ENCODE measurements at regions of chr7 and their contacts with region 1.

Region 1: GRCh38 chr7:151368136-151368571 is 26.5 kb downstream of the NUB1 start:
- DNase-seq: peak; percentile 62 to 80 (median 74)
- H3K4me3 ChIP-seq: no peak overlapping the region
- H3K27ac ChIP-seq: no peak overlapping the region
- H3K4me1 ChIP-seq: no peaks in the 10 kb centered on the region
- H3K27me3 ChIP-seq: no peaks in the 10 kb centered on the region

Region 2: DNA sequence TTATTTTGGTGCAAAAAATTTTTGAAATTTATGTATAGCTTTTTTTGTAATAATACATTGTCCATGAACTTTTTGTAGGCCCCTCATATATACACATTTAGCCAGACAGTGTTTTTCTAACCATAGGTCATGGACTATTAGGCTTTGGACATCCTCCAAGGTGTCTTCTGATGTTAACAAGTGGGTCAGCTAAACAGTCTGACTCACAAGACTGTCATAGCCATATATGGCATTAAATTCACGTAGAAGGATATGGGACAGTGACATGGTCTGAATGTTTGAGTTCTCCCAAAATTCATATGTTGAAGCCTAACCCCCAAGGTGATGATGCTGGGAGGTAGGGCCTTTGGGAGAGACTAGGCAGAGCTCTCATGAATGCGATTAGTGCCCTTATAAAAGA is 40.5 kb before region 1 on chr7:
- CTCF ChIA-PET with region 1: no interaction called
- POLR2A ChIA-PET with region 1: no interaction called
- DNase-seq: no peak
- H3K4me3 ChIP-seq: no peak overlapping the region
- H3K27ac ChIP-seq: no peak overlapping the region
- H3K4me1 ChIP-seq: no peaks in the 10 kb centered on the region
- H3K27me3 ChIP-seq: peaks cover 0 to 3% (median 0%) of the 10 kb centered on the region in 5 experiments

Region 3: GRCh38 chr7:151381348-151382078 is 13.4 kb after region 1 on chr7:
- CTCF ChIA-PET with region 1: interaction called, 11 read pairs
- POLR2A ChIA-PET with region 1: no interaction called
- DNase-seq: peak in 2 of 3 donors; percentile 21 to 49
- H3K4me3 ChIP-seq: peak overlapping the region in 6 of 7 experiments; percentile 9 to 63 (median 54)
- H3K27ac ChIP-seq: no peak overlapping the region
- H3K4me1 ChIP-seq: peaks cover 0 to 21% (median 18%) of the 10 kb centered on the region in 4 experiments
- H3K27me3 ChIP-seq: peaks cover 0 to 53% (median 16%) of the 10 kb centered on the region in 5 experiments

Region 4: GRCh38 chr7:151386301-151387132 is 18.4 kb after region 1 on chr7:
- CTCF ChIA-PET with region 1: interaction called, 11 read pairs
- POLR2A ChIA-PET with region 1: no interaction called
- DNase-seq: no peak
- H3K4me3 ChIP-seq: no peak overlapping the region
- H3K27ac ChIP-seq: no peak overlapping the region
- H3K4me1 ChIP-seq: peaks cover 0 to 25% (median 17%) of the 10 kb centered on the region in 4 experiments
- H3K27me3 ChIP-seq: peaks cover 0 to 43% (median 19%) of the 10 kb centered on the region in 5 experiments

Region 5: GRCh38 chr7:151408839-151409666 is 40.9 kb after region 1 on chr7:
- CTCF ChIA-PET with region 1: interaction called, 11 read pairs
- POLR2A ChIA-PET with region 1: no interaction called
- DNase-seq: peak; percentile 50 to 85 (median 75)
- H3K4me3 ChIP-seq: peak overlapping the region in 6 of 7 experiments; percentile 10 to 67 (median 61)
- H3K27ac ChIP-seq: no peak overlapping the region
- H3K4me1 ChIP-seq: peaks cover 0 to 40% (median 32%) of the 10 kb centered on the region in 4 experiments
- H3K27me3 ChIP-seq: peaks cover 0 to 72% (median 26%) of the 10 kb centered on the region in 5 experiments